ENCODE measurements at regions of chr1 and their contacts with region 1.

Region 1: DNA sequence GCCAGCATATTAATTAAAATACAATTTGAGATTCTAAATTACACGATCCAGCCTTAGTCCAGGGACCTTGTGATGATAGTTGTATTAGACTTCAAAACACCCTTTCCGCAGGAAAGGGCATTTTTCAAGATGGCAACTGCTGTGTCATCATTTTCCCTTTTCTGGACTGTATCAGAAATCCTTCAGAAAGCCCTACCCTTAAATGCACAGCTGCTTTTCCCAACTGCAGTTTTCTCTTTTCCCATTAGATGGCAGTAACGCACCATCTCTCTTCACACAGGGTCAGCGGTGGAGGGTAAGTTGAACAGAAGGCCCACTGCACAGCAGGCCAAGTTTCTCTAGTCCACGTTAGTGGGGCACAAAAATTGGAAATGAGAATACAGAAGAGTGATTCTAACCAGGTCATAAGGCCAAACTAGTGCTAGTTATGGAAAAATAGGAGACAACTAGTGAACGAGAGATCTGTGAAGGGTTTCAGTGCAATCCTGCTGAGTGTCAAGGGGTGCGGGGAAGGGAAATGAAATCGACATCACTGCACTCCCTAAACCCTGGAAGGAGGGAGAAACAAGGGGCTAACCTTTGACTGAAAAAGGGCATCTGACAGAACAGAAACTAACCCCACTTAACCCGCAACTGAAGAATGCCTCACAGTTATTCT is 22.1 kb upstream of the TDRD10 start:
- DNase-seq: peak; percentile 73
- H3K4me3 Mint-ChIP-seq: no peak overlapping the region
- H3K27ac Mint-ChIP-seq: no peak overlapping the region
- H3K4me1 Mint-ChIP-seq: peaks cover 28% of the 10 kb centered on the region
- H3K27me3 Mint-ChIP-seq: no peaks in the 10 kb centered on the region

Region 2: GRCh38 chr1:153617675-153618074 is 862.2 kb before region 1 on chr1:
- CTCF ChIA-PET with region 1: no interaction called
- intact Hi-C with region 1: no loop called
- DNase-seq: peak; percentile 72
- H3K4me3 Mint-ChIP-seq: no peak overlapping the region
- H3K27ac Mint-ChIP-seq: no peak overlapping the region
- H3K4me1 Mint-ChIP-seq: peaks cover 1% of the 10 kb centered on the region
- H3K27me3 Mint-ChIP-seq: no peaks in the 10 kb centered on the region

Region 3: DNA sequence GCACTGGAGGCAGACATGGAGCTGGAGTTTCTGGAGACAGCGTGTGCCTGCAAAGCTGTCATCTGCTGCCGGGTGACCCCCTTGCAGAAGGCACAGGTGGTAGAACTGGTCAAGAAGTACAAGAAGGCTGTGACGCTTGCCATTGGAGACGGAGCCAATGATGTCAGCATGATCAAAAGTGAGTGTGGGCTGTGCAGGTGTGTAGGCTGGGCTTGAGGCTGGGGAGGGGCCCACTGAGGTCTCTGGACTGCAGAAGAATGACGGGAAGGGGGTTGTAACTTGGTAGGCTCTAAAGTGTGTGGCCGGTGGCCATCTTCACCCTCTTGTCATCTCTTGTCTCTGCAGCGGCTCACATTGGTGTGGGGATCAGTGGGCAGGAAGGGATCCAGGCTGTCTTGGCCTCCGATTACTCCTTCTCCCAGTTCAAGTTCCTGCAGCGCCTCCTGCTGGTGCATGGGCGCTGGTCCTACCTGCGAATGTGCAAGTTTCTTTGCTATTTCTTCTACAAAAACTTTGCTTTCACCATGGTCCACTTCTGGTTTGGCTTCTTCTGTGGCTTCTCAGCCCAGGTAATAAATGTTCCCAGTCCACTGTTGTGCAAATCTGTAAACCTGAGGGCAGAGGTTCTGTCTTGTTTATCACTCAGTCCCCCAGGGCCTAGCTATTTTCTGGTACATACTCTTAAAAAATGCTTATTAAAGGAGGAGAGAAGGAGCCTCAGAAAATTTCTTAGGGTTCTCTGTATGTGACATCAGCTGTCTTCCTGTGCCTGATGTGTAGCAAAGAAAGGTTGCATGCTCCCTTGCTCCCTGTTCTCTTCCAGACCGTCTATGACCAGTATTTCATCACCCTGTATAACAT is 134.7 kb before region 1 on chr1:
- CTCF ChIA-PET with region 1: interaction called, 5 read pairs
- intact Hi-C with region 1: loop called (anchors 1 kb)
- DNase-seq: peak; percentile 86
- H3K4me3 Mint-ChIP-seq: peak overlapping the region; percentile 33
- H3K27ac Mint-ChIP-seq: peak overlapping the region; percentile 68
- H3K4me1 Mint-ChIP-seq: peaks cover 72% of the 10 kb centered on the region
- H3K27me3 Mint-ChIP-seq: no peaks in the 10 kb centered on the region

Region 4: DNA sequence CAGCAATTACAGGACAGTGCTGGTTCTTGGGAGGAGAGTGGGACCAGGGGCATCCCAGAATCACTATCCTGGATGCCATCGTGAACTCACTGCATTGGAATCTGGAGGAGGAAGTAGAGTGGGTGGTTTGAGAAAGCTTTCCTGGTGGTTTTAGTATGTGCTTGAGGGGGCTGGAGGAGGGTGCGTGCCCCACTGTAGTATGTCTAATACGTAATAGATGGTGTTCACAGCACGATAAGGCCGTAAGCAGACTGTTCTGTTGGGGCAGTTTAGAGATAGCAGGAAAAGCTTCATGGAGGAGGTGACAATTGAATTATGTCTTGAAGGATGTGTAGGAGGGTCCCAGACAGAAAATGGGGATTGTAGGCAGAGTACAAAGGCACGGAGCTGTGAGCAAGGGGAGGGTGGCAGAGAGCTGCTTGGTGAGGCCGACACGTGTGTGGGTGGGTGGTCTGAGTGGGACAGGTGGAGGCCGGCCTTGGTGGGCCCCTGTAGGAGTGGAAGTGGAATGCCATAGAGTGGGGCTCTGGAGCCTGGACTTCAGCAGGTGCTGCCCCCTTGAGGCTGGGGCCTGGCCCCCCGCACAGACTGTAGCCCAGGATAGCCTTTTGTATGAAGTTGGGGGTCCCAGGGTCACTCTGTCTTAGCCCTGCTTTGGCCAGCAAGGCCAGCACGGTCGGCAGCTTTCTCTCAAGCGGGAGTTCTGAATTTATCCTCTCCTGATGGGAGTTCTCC is 37.7 kb before region 1 on chr1:
- CTCF ChIA-PET with region 1: interaction called, 6 read pairs
- intact Hi-C with region 1: loop called (anchors 2 kb)
- DNase-seq: no peak
- H3K4me3 Mint-ChIP-seq: no peak overlapping the region
- H3K27ac Mint-ChIP-seq: no peak overlapping the region
- H3K4me1 Mint-ChIP-seq: peaks cover 72% of the 10 kb centered on the region
- H3K27me3 Mint-ChIP-seq: no peaks in the 10 kb centered on the region

Region 5: DNA sequence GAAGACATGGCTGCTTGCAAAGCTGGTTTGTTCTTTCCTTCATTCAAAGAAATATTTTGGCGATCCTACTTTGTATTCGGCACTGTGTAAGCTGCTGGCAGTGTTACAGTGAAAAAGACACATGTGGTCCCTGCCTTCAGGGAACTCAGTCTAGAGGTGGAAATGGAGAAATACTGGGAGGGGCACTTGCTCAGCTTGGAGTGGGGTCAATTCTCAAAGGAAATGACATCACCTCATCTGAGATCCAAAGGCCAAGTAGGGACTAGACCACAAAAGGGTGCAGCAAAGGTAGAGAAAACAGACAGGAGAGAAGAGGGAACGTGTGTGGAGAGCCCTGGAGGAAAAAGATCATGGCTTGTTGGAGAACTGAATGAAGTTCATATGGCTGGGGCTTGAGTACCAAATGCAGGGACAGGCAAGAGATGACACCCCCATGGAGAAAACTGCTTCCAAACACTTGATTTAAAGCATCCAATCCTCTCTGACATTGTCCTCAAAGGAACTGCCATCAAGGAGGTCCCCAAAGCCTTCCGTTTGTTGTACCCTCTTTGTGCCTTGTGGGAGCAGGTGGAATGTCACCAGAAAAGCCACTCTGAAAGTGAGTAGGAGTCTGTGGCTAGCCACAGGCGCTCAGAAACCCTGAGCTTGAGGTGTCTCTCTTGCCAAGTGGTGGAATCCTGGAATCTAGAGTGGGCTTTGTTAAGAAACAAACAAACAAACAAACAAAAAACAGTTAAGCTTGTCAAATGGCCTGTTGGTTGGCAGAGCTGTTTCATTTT is 26.1 kb before region 1 on chr1:
- CTCF ChIA-PET with region 1: no interaction called
- intact Hi-C with region 1: no loop called
- DNase-seq: no peak
- H3K4me3 Mint-ChIP-seq: no peak overlapping the region
- H3K27ac Mint-ChIP-seq: no peak overlapping the region
- H3K4me1 Mint-ChIP-seq: peaks cover 24% of the 10 kb centered on the region
- H3K27me3 Mint-ChIP-seq: no peaks in the 10 kb centered on the region

Region 6: GRCh38 chr1:154546264-154547063 is 66.6 kb after region 1 on chr1:
- CTCF ChIA-PET with region 1: interaction called, 89 read pairs
- intact Hi-C with region 1: loop called (anchors 1 kb)
- DNase-seq: peak; percentile 77
- H3K4me3 Mint-ChIP-seq: no peak overlapping the region
- H3K27ac Mint-ChIP-seq: no peak overlapping the region
- H3K4me1 Mint-ChIP-seq: peaks cover 21% of the 10 kb centered on the region
- H3K27me3 Mint-ChIP-seq: no peaks in the 10 kb centered on the region

Region 7: DNA sequence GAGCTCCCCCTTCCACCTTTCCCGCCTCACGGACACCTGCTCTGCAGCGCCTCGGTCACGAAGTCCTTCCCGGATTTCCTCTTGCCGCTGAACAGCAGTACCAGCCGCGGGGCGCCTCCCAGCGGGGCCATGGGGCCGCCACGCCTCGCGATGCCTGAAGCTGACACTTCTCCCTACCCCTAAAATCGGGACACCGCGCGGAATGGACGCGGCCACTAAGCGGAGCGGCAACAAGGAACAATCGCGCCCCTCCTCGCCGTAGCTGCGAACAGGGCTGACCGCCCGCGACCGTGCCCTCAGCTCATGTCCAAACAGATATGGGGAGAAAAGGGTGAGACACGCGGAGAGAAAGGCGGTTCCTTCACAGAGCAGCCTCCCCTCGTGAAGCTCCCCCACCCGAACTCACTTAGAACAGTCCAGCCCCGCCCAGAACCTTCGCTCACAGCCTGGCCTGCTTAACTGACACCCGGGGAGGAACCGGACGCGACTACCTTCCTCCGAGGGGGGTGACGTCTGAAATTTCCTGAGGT is 456.7 kb after region 1 on chr1 and contains the start of gene PMVK:
- CTCF ChIA-PET with region 1: no interaction called
- intact Hi-C with region 1: loop called (anchors 5 kb)
- DNase-seq: peak; percentile 97
- H3K4me3 Mint-ChIP-seq: peak within 1 kb of the TSS; percentile 83
- H3K27ac Mint-ChIP-seq: peak within 1 kb of the TSS; percentile 97
- H3K4me1 Mint-ChIP-seq: peaks cover 47% of the 10 kb centered on the region
- H3K27me3 Mint-ChIP-seq: no peaks in the 10 kb centered on the region
- total RNA-seq, gene PMVK: 29.8 to 30.5 TPM